ENCODE measurements at regions of chr3 and their contacts with region 1.

Region 1: DNA sequence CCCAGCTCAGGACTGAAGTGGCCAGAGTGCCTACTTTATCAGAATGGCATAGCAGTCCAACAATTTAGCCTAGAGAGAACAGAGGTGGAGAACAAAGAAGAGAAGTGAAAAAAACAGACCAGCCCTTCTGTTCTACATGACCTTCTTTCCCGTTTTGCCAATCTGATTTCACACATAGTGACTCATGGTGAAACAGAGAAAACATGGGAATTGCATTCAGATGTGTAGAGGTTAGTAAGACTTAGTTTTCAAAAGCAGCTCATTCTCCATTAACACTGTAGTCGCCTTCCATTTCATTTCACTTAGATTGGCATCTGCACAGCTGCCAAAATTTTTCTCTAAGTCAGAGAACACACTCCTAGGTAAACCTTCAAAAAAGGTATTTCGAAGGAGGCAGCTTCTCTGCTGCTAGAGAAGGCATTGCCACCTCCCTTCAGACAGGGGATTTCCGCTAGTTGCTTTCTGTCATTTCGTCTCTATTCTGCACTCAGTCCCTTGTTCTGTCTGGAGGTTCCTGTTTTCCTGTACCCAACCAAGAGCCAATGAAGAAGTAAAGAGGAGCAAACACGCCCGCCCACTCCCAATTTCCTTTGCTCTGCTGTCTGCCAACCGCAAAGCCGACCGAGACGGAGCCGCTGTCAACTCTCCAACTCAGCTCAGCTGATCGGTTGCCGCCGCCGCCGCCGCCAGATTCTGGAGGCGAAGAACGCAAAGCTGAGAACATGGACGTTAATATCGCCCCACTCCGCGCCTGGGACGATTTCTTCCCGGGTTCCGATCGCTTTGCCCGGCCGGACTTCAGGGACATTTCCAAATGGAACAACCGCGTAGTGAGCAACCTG is at the start of gene ARL6IP5:
- DNase-seq: peak; percentile 80 to 97 (median 88)
- ATAC-seq: peak; percentile 74
- H3K4me3 ChIP-seq: peak within 1 kb of the TSS; percentile 85
- H3K4me3 Mint-ChIP-seq: peak within 1 kb of the TSS; percentile 91
- H3K27ac ChIP-seq: peak within 1 kb of the TSS; percentile 91
- H3K27ac Mint-ChIP-seq: peak within 1 kb of the TSS; percentile 96
- H3K4me1 ChIP-seq: peaks cover 58% of the 10 kb centered on the region
- H3K4me1 Mint-ChIP-seq: peaks cover 73% of the 10 kb centered on the region
- H3K27me3 ChIP-seq: no peaks in the 10 kb centered on the region
- H3K27me3 Mint-ChIP-seq: no peaks in the 10 kb centered on the region
- CTCF ChIP-seq: no peak
- total RNA-seq, gene ARL6IP5: 58.0 to 65.2 TPM

Region 2: GRCh38 chr3:69013253-69014021 is 71.1 kb before region 1 on chr3 and contains the start of gene EOGT:
- CTCF ChIA-PET with region 1: interaction called, 3 read pairs
- POLR2A ChIA-PET with region 1: interaction called, 11 read pairs
- intact Hi-C with region 1: no loop called
- DNase-seq: peak; percentile 60 to 90 (median 76)
- ATAC-seq: peak; percentile 78
- H3K4me3 ChIP-seq: peak within 1 kb of the TSS; percentile 77
- H3K4me3 Mint-ChIP-seq: peak within 1 kb of the TSS; percentile 94
- H3K27ac ChIP-seq: peak within 1 kb of the TSS; percentile 10 to 39
- H3K27ac Mint-ChIP-seq: peak within 1 kb of the TSS; percentile 66
- H3K4me1 ChIP-seq: peaks cover 17% of the 10 kb centered on the region
- H3K4me1 Mint-ChIP-seq: peaks cover 34% of the 10 kb centered on the region
- H3K27me3 ChIP-seq: no peaks in the 10 kb centered on the region
- H3K27me3 Mint-ChIP-seq: no peaks in the 10 kb centered on the region
- CTCF ChIP-seq: peak; percentile 69
- total RNA-seq, gene EOGT: 13.0 to 13.4 TPM

Region 3: GRCh38 chr3:69058180-69058946 is 26.2 kb before region 1 on chr3:
- CTCF ChIA-PET with region 1: interaction called, 4 read pairs
- POLR2A ChIA-PET with region 1: interaction called, 42 read pairs
- intact Hi-C with region 1: loop called in 1 of 2 experiments (anchors 2 kb)
- DNase-seq: peak in 4 of 14 experiments; percentile 17 to 78 (median 57)
- ATAC-seq: peak; percentile 97
- H3K4me3 ChIP-seq: no peak overlapping the region
- H3K4me3 Mint-ChIP-seq: peak overlapping the region; percentile 32
- H3K27ac ChIP-seq: peak overlapping the region; percentile 32 to 67
- H3K27ac Mint-ChIP-seq: peak overlapping the region; percentile 84
- H3K4me1 ChIP-seq: peaks cover 15% of the 10 kb centered on the region
- H3K4me1 Mint-ChIP-seq: peaks cover 35% of the 10 kb centered on the region
- H3K27me3 ChIP-seq: no peaks in the 10 kb centered on the region
- H3K27me3 Mint-ChIP-seq: no peaks in the 10 kb centered on the region
- CTCF ChIP-seq: no peak

Region 4: GRCh38 chr3:69065318-69065964 is 19.1 kb before region 1 on chr3:
- CTCF ChIA-PET with region 1: interaction called, 3 read pairs
- POLR2A ChIA-PET with region 1: interaction called, 42 read pairs
- intact Hi-C with region 1: no loop called
- DNase-seq: peak in 4 of 14 experiments; percentile 35 to 72 (median 52)
- ATAC-seq: peak; percentile 69
- H3K4me3 ChIP-seq: no peak overlapping the region
- H3K4me3 Mint-ChIP-seq: peak overlapping the region; percentile 65
- H3K27ac ChIP-seq: peak overlapping the region; percentile 30 to 49
- H3K27ac Mint-ChIP-seq: peak overlapping the region; percentile 78
- H3K4me1 ChIP-seq: peaks cover 15% of the 10 kb centered on the region
- H3K4me1 Mint-ChIP-seq: peaks cover 37% of the 10 kb centered on the region
- H3K27me3 ChIP-seq: no peaks in the 10 kb centered on the region
- H3K27me3 Mint-ChIP-seq: no peaks in the 10 kb centered on the region
- CTCF ChIP-seq: no peak

Region 5: GRCh38 chr3:69097407-69098086 is 13.0 kb after region 1 on chr3:
- CTCF ChIA-PET with region 1: interaction called, 6 read pairs
- POLR2A ChIA-PET with region 1: interaction called, 75 read pairs
- intact Hi-C with region 1: loop called in 1 of 2 experiments (anchors 1 kb)
- DNase-seq: no peak
- ATAC-seq: no peak
- H3K4me3 ChIP-seq: no peak overlapping the region
- H3K4me3 Mint-ChIP-seq: peak overlapping the region; percentile 56
- H3K27ac ChIP-seq: peak overlapping the region; percentile 26 to 43
- H3K27ac Mint-ChIP-seq: peak overlapping the region; percentile 92
- H3K4me1 ChIP-seq: peaks cover 68% of the 10 kb centered on the region
- H3K4me1 Mint-ChIP-seq: peaks cover 83% of the 10 kb centered on the region
- H3K27me3 ChIP-seq: no peaks in the 10 kb centered on the region
- H3K27me3 Mint-ChIP-seq: no peaks in the 10 kb centered on the region
- CTCF ChIP-seq: no peak

Region 6: GRCh38 chr3:69108811-69109210 is 24.3 kb after region 1 on chr3:
- CTCF ChIA-PET with region 1: no interaction called
- POLR2A ChIA-PET with region 1: interaction called, 14 read pairs
- intact Hi-C with region 1: no loop called
- DNase-seq: no peak
- ATAC-seq: no peak
- H3K4me3 ChIP-seq: no peak overlapping the region
- H3K4me3 Mint-ChIP-seq: no peak overlapping the region
- H3K27ac ChIP-seq: no peak overlapping the region
- H3K27ac Mint-ChIP-seq: peak overlapping the region; percentile 4
- H3K4me1 ChIP-seq: peaks cover 7% of the 10 kb centered on the region
- H3K4me1 Mint-ChIP-seq: peaks cover 31% of the 10 kb centered on the region
- H3K27me3 ChIP-seq: no peaks in the 10 kb centered on the region
- H3K27me3 Mint-ChIP-seq: no peaks in the 10 kb centered on the region
- CTCF ChIP-seq: no peak

Region 7: GRCh38 chr3:69160525-69160924 is 76.0 kb after region 1 on chr3:
- CTCF ChIA-PET with region 1: no interaction called
- POLR2A ChIA-PET with region 1: no interaction called
- intact Hi-C with region 1: no loop called
- DNase-seq: no peak
- ATAC-seq: no peak
- H3K4me3 ChIP-seq: no peak overlapping the region
- H3K4me3 Mint-ChIP-seq: no peak overlapping the region
- H3K27ac ChIP-seq: no peak overlapping the region
- H3K27ac Mint-ChIP-seq: no peak overlapping the region
- H3K4me1 ChIP-seq: no peaks in the 10 kb centered on the region
- H3K4me1 Mint-ChIP-seq: no peaks in the 10 kb centered on the region
- H3K27me3 ChIP-seq: no peaks in the 10 kb centered on the region
- H3K27me3 Mint-ChIP-seq: no peaks in the 10 kb centered on the region
- CTCF ChIP-seq: no peak

Measured in CD4-positive, alpha-beta T cell (primary cell).